ENCODE measurements at regions of chr19 and their contacts with region 1.

Region 1: GRCh38 chr19:47713046-47714021 is at the start of gene EHD2:
- DNase-seq: peak; percentile 54 to 70
- H3K4me3 ChIP-seq: peak within 1 kb of the TSS; percentile 60 to 88 (median 76)
- H3K27ac ChIP-seq: peak within 1 kb of the TSS; percentile 86 to 91
- H3K4me1 ChIP-seq: no peaks in the 10 kb centered on the region
- H3K27me3 ChIP-seq: no peaks in the 10 kb centered on the region
- CTCF ChIP-seq: peak; percentile 88 to 98 (median 98)
- POLR2A ChIP-seq: no peak
- total RNA-seq, gene EHD2: 38.8 to 121 (median 67.2) TPM

Region 2: DNA sequence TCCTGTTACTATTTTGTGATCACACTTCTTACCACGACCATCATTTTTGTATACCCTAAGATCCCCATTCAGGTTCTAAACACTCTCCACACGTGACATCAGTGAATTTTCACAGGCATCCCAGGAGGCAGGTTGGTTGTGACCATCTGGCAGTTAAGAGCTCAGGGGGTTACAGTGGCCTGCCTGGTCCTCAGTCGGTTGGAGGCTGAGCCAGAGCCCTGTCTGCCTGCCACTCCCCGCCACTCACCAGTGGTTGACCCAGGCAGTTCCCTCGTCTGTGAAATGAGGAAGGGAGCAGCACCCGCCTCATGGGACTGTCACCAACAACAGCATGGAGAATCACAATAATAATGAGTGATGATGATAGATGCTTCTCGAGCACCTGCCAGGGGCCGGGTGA is 36.5 kb before region 1 on chr19:
- intact Hi-C with region 1: loop called (anchors 2 kb)
- DNase-seq: no peak
- H3K4me3 ChIP-seq: no peak overlapping the region
- H3K27ac ChIP-seq: no peak overlapping the region
- H3K4me1 ChIP-seq: no peaks in the 10 kb centered on the region
- H3K27me3 ChIP-seq: no peaks in the 10 kb centered on the region
- CTCF ChIP-seq: no peak
- POLR2A ChIP-seq: no peak

Region 3: DNA sequence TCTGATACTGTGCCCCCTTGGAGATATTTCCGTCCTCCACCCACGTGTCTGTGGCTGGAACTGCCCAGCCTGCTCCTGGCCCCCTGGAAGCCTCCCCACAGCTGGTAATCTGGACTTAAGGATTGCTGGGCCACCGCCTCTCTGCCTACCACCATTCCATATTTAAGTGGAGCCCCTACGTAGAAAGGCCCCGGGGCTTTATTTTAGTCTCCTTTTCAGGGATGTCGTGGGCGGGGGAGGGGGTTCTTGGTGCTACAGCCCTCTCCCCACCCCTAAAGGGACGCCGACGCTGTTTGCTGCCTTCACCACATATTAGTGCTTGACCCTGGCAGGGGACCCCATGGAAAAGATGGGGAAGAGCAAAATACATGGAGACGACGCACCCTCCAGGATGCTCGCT is 29.3 kb after region 1 on chr19:
- intact Hi-C with region 1: loop called (anchors 1 kb)
- DNase-seq: peak in 1 of 2 donors; percentile 33
- H3K4me3 ChIP-seq: peak overlapping the region; percentile 30 to 65 (median 49)
- H3K27ac ChIP-seq: peak overlapping the region; percentile 99
- H3K4me1 ChIP-seq: peaks cover 0 to 15% of the 10 kb centered on the region in 2 donors
- H3K27me3 ChIP-seq: no peaks in the 10 kb centered on the region
- CTCF ChIP-seq: no peak
- POLR2A ChIP-seq: no peak

Region 4: DNA sequence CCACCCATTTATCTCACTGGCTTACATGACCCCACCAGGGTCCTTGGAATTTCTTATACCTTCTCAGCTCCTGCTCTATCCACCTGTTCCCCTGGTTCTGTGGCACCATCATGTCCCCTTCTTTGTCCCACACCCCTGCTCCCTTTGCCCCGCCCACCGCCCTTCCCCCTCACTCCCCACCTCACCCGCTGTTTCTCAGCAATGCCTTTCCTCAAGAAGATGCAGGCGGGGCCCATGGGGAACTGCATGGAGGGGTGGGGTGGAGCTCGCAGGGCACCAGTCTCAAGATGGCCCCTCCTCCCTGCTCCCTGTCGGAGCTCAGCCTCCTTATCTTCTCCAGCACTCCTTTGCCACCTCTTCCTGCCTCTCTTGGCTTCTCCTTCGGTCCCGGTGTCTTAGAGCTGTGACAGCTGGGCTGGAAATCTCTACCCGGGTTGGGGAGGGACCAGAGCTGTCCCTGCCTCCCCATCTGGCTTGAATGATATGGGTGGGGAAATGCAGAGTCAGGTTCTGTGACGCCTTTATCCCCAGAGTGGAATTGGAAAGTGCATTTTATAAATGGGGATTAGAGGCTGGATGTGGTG is 330.4 kb after region 1 on chr19 and contains the start of gene CABP5:
- intact Hi-C with region 1: no loop called
- DNase-seq: no peak
- H3K4me3 ChIP-seq: no peak within 1 kb of the TSS
- H3K27ac ChIP-seq: no peak within 1 kb of the TSS
- H3K4me1 ChIP-seq: no peaks in the 10 kb centered on the region
- H3K27me3 ChIP-seq: peaks cover 0 to 20% of the 10 kb centered on the region in 2 donors
- CTCF ChIP-seq: no peak
- POLR2A ChIP-seq: no peak
- total RNA-seq, gene CABP5: not detected

Measured in breast epithelium (tissue), 4 donors.